Activated B cell treated with CpG ODN at 0.5 μM for 24 hours (primary cell): ENCODE measurements at regions of chr22 and their contacts with region 1.

Region 1: GRCh38 chr22:36506637-36507517 is at the start of gene FOXRED2:
- DNase-seq: peak; percentile 91
- ATAC-seq: peak; percentile 96
- H3K4me3 Mint-ChIP-seq: peak within 1 kb of the TSS; percentile 76
- H3K27ac Mint-ChIP-seq: peak within 1 kb of the TSS; percentile 63
- H3K4me1 Mint-ChIP-seq: peaks cover 17% of the 10 kb centered on the region
- H3K27me3 Mint-ChIP-seq: no peaks in the 10 kb centered on the region
- CTCF ChIP-seq: no peak
- total RNA-seq, gene FOXRED2: 3.9 and 6.5 TPM in 2 replicates

Region 2: GRCh38 chr22:36493690-36494110 is 13.2 kb before region 1 on chr22:
- CTCF ChIA-PET with region 1: interaction called, 5 read pairs
- POLR2A ChIA-PET with region 1: interaction called, 15 read pairs
- intact Hi-C with region 1: no loop called
- DNase-seq: peak; percentile 41
- ATAC-seq: peak; percentile 86
- H3K4me3 Mint-ChIP-seq: peak overlapping the region; percentile 67
- H3K27ac Mint-ChIP-seq: peak overlapping the region; percentile 79
- H3K4me1 Mint-ChIP-seq: peaks cover 26% of the 10 kb centered on the region
- H3K27me3 Mint-ChIP-seq: no peaks in the 10 kb centered on the region
- CTCF ChIP-seq: no peak

Region 3: DNA sequence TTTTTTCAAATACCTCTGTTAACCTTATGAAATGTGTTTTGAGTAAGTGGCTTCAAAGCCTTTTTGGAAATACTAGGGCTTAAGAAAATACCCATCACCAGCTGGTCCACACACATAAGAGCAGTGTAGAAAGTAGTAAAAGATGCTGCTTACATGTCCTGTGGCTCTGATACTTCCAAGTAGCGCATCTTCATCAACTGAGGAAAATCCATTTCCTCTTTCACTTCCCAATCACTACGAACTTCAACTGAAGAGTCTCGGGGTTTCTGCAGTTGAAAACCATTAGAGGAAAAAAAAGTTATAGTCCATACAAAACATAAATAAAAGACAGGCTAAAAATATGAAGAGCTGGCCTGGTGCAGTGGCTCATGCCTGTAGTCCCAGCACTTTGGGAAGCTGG is 13.5 kb after region 1 on chr22:
- CTCF ChIA-PET with region 1: interaction called, 4 read pairs
- POLR2A ChIA-PET with region 1: interaction called, 10 read pairs
- intact Hi-C with region 1: no loop called
- DNase-seq: no peak
- ATAC-seq: no peak
- H3K4me3 Mint-ChIP-seq: no peak overlapping the region
- H3K27ac Mint-ChIP-seq: no peak overlapping the region
- H3K4me1 Mint-ChIP-seq: peaks cover 7% of the 10 kb centered on the region
- H3K27me3 Mint-ChIP-seq: no peaks in the 10 kb centered on the region
- CTCF ChIP-seq: no peak

Region 4: DNA sequence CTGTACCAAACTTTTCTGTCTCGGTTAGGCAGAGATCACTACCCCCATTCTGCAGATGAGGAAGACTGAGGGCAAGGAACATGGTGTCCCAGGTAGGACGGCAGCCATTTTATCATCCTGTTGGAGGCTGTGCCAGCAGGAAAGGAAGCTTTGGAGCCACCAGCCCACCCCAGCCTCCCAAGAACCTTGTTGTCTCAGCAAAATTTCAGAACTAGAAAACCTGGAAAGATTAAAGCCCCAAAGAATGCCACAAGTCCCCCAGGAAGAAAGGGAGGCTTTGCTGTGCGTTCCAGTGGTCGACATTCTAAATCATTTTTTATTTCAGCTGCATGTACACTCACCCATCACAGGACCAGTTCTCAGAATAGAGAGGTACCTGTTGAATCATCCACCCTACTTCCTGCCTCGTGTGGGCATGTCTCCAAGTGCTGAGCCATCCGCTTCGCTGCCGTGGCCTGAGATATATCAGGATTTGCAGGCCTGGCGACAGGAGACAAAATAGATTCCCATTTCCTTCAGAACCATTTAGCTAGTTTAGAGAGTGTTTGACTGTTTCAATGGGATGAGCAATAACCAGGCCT is 35.0 kb after region 1 on chr22:
- CTCF ChIA-PET with region 1: no interaction called
- POLR2A ChIA-PET with region 1: no interaction called
- intact Hi-C with region 1: no loop called
- DNase-seq: no peak
- ATAC-seq: no peak
- H3K4me3 Mint-ChIP-seq: no peak overlapping the region
- H3K27ac Mint-ChIP-seq: no peak overlapping the region
- H3K4me1 Mint-ChIP-seq: peaks cover 5% of the 10 kb centered on the region
- H3K27me3 Mint-ChIP-seq: no peaks in the 10 kb centered on the region
- CTCF ChIP-seq: no peak